Posterior vena cava (tissue), 2 donors: ENCODE measurements at regions of chr1 and their contacts with region 1.

Region 1: GRCh38 chr1:202692959-202693555 is 17.2 kb downstream of the SYT2 start:
- DNase-seq: peak; percentile 84

Region 2: DNA sequence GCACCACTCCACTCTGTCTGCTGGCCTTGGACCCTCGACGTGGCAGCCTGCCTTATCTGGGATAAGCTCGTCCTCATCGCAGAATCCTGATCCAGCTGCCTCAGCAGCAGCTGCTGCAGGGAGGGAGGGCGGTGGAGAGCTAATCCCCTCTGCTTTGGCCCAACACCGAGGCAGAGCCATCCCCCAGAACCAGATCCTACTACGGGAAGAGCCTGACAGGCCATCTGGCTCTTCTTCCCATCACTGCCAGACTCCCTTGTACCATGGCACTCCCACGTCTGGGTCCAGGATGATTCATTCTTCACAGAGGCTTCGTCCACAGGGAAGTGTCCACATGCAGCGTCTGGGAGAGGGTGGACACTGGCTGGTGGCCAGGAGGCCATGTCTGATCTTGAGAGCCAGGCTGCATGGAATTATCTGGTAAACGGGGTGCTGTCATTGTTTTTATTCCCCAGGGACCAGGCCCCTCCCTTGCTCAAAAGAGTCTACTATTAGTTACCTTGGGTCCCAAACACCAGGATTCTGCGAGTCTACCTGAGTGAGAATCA is 1424.4 kb before region 1 on chr1:
- intact Hi-C with region 1: no loop called
- DNase-seq: peak; percentile 88

Region 3: DNA sequence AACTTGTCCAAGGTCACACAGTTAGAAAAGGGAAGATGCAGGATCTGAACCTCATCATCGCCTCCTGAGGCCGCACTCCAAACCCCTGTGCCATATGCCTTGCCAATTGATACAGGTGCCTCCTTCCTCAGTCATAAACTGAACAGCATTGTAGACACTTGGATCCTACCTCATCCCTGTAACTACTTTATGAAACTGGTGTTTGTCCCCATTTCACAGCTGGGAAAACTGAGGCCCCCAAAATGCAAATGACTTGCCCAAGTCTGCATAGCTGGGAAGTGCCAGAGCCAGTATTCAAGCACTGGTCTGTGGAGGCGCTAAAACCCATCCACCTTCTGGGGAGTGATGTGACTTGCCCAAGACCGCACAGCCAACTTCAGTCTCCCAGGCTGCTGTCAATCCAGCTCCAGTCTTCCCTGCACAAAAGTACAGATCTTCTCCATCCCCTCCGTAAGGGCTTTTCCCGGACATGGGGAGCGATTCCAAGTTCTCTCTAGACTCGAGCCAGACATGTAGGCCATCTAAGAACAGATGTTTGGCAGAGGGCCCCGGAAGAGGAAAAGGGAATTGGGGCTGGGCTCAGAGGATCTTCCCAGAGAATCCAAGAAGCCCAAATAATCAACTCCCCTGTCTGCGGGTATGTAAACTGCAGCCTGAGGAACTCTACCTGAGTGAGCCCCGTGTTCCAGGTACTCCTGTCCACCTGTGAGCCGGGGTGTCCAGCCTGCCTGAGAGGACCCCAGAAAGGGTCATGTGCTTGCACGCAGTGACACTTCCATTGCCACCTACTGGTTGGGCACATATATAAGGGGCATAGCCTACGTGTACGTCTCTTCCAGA is 43.3 kb before region 1 on chr1:
- intact Hi-C with region 1: no loop called
- DNase-seq: no peak

Region 4: GRCh38 chr1:202680586-202681352 is 12.3 kb before region 1 on chr1:
- intact Hi-C with region 1: loop called in 1 of 2 experiments (anchors 2 kb)
- DNase-seq: no peak

Region 5: DNA sequence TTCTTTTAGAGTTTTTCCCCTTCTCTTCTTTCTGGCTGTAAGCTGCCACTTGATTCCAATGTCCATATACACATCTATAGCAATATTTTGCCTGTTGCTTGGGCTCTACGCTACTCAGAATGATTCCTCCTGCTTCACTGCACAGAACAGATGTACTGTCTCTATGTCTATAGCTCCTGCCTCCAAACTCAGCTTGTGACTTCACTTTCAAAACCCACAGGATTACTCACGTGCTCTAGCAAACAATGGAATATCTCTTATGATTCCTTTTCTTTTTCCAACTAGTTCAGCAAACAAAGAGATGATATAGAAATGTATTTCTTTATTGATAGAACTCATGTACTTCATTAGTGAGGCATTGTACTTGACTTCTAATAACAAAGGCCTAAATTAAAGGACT is 1299.4 kb after region 1 on chr1:
- intact Hi-C with region 1: loop called in 1 of 2 experiments (anchors 5 kb)
- DNase-seq: no peak